Breast epithelium (tissue), 4 donors: ENCODE measurements at regions of chr10 and their contacts with region 1.

Region 1: DNA sequence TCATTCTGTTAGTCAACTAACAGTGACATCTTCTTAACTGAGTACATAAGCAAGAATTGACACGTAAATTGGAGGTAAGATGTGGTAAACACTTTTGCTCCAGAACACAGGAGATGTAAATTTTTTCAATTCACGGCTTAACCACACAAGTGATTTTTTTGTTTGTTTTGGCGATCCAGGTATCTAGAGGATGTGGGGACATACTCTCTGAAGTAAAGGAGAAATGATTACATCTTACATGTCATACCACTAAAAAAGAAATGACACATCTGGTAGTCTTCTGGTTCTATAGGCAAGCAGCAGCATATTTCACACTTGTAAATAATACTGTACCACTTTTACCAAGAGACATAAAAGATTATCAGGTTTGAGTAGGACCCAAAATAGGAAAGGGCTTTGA is 200.3 kb upstream of the ZWINT start:
- DNase-seq: no peak
- H3K4me3 ChIP-seq: no peak overlapping the region
- H3K27ac ChIP-seq: no peak overlapping the region
- H3K4me1 ChIP-seq: no peaks in the 10 kb centered on the region
- H3K27me3 ChIP-seq: no peaks in the 10 kb centered on the region
- CTCF ChIP-seq: no peak
- POLR2A ChIP-seq: no peak

Region 2: DNA sequence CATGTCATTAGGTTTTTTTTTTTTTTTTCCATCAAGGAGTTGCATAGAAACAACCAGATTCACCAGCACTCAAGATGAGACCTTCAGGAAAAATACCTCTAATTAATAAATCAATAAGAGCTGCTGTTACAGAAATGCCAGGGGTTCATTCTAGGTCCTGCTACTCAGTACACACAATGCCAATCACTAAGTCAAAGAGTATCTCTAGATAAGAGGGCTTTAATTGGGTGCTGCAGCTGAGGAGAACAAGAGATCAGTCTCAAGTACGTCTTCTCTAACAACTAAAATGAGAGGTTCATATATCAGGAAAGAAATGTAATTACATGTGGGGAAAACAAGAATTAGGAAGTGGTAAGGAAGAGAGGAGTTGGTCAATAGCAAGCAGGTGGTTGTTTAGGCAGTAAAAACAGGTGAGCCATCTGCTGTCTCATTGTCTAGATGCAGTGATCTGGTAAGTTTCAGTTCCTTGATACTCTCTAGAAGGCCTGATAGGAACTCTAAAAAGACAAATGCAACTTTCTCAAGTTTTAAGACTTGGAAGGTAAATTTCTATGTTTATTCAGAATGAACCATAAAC is 72.6 kb after region 1 on chr10:
- intact Hi-C with region 1: loop called (anchors 5 kb)
- DNase-seq: no peak
- H3K4me3 ChIP-seq: no peak overlapping the region
- H3K27ac ChIP-seq: no peak overlapping the region
- H3K4me1 ChIP-seq: no peaks in the 10 kb centered on the region
- H3K27me3 ChIP-seq: no peaks in the 10 kb centered on the region
- CTCF ChIP-seq: no peak
- POLR2A ChIP-seq: no peak

Region 3: GRCh38 chr10:57351076-57351475 is 789.7 kb after region 1 on chr10:
- intact Hi-C with region 1: no loop called
- DNase-seq: no peak
- H3K4me3 ChIP-seq: no peak overlapping the region
- H3K27ac ChIP-seq: no peak overlapping the region
- H3K4me1 ChIP-seq: no peaks in the 10 kb centered on the region
- H3K27me3 ChIP-seq: no peaks in the 10 kb centered on the region
- CTCF ChIP-seq: no peak
- POLR2A ChIP-seq: no peak